Activated B cell treated with CpG ODN at 0.5 μM for 24 hours (primary cell): ENCODE measurements at regions of chr5 and their contacts with region 1.

Region 1: DNA sequence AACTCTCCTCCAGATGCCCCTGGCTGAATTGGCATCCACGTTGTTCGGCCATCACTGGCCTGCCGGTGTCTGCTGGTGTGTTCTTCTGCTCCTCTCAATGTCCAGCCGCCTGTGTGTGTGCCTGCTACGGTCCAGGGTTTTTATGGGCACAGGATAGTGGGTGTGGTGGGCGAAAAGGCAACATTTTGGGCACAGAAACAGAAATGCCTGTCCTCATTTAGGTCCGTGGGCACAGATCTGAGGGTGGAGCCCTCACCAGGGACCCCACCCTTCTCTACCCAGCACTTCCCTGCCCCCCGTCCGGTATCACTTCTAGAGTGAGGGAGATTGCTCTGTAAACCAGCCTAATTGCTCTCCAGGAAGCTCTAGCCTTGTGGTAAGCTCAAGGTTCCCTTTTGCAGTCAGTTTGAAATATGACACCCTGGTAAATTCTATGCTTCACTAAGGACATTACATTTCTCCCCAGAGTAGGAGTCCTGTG is 410.1 kb downstream of the MAT2B start:
- DNase-seq: peak; percentile 50
- ATAC-seq: peak; percentile 59
- H3K4me3 Mint-ChIP-seq: peak overlapping the region; percentile 85
- H3K27ac Mint-ChIP-seq: peak overlapping the region; percentile 99
- H3K4me1 Mint-ChIP-seq: peaks cover 74% of the 10 kb centered on the region
- H3K27me3 Mint-ChIP-seq: no peaks in the 10 kb centered on the region
- CTCF ChIP-seq: no peak

Region 2: DNA sequence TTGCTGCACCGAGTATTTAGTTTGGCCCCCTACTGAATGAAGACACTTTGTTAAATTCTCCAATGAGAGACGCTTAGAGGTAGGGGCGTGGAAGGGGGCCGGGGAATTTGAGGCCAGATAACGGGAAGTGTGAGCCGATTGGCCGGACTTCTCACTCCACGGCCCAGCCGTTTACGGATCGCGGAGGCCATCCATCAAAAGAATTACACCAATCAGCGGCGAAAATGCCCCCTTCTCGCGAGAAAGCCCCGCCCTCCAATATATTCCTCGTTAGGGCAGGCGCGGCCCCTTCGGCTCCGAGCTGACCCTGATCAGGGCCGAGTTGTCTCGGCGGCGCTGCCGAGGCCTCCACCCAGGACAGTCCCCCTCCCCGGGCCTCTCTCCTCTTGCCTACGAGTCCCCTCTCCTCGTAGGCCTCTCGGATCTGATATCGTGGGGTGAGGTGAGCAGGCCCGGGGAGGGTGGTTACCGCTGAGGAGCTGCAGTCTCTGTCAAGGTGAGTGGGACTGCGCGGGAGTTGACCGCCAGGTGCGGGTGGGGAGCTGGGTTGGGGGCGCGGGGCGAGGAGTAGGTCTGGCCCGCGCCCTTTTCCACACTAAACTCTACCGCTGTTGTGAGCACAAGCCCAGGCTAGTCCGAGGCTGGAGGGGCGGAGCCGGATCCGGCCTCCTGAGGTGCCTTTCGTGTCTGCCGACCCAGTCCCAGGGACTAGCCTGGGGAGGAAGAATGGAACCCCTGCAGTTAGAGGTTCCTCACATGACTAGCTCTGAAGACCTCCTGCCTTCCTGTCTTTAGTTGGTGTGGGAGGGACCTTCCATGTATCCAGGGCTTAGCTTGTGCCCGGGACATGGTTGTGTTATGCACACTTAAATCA is 478.0 kb before region 1 on chr5 and contains the start of gene CCNG1:
- CTCF ChIA-PET with region 1: no interaction called
- POLR2A ChIA-PET with region 1: interaction called, 4 read pairs
- intact Hi-C with region 1: loop called (anchors 1 kb)
- DNase-seq: peak; percentile 76
- ATAC-seq: peak; percentile 97
- H3K4me3 Mint-ChIP-seq: peak within 1 kb of the TSS; percentile 89
- H3K27ac Mint-ChIP-seq: peak within 1 kb of the TSS; percentile 89
- H3K4me1 Mint-ChIP-seq: peaks cover 34% of the 10 kb centered on the region
- H3K27me3 Mint-ChIP-seq: no peaks in the 10 kb centered on the region
- CTCF ChIP-seq: no peak
- total RNA-seq, gene CCNG1: 71.2 and 73.0 TPM in 2 replicates

Region 3: DNA sequence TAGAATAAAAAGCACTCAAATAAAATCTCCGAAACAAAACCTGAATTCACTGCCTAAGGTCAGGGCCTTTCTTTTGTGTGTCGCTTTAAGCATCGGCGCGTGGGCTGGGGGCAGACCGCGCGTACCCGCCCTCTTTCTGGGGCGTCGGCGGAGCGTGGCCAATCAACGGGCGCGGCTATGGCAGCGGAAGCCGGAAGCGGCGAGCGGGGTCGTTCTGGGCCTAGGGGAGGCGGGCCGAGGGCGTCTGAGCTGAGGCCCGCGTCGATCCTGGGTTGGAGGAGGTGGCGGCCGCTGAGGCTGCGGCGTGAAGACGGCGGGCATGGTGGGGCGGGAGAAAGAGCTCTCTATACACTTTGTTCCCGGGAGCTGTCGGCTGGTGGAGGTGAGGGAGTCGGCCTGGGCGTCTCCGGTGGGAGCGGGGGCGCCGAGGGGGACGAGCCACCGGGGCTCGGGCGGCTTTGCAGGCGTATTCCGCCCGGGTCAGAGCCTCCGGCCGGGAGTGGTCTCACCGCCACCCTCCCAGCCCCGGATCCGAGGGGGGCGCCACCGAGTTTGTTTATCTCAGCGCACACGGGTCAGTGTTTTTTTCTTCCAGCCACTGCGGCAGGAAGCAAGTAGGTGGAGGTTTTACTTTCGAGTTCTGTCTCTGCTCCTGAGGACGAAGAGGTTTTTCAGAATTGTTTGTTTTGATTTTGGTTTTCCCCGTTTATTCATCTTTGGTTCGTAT is 410.0 kb before region 1 on chr5 and contains the start of gene MAT2B:
- CTCF ChIA-PET with region 1: no interaction called
- POLR2A ChIA-PET with region 1: interaction called, 6 read pairs
- intact Hi-C with region 1: loop called (anchors 1 kb)
- DNase-seq: peak; percentile 92
- ATAC-seq: peak; percentile 90
- H3K4me3 Mint-ChIP-seq: peak within 1 kb of the TSS; percentile 95
- H3K27ac Mint-ChIP-seq: peak within 1 kb of the TSS; percentile 97
- H3K4me1 Mint-ChIP-seq: peaks cover 69% of the 10 kb centered on the region
- H3K27me3 Mint-ChIP-seq: no peaks in the 10 kb centered on the region
- CTCF ChIP-seq: no peak
- total RNA-seq, gene MAT2B: 74.7 and 76.4 TPM in 2 replicates

Region 4: DNA sequence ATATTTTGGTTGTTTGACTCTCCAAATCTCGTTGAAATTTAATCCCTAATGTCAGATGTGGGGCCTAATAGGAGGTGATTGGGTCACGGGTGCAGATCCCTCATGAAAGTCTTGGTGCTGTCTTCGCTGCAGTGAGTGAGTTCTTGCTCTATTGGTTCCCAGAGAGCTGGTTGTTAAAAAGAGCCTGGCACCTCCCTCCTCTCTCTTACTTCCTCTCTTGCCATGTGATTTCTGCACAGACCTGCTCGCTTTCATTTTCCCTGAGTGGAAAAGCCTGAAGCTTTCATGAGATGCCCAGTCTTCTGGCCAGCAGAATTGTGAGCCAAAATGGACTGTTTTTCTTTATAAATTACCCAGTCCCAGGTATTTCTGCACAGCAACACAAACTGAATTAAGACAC is 188.5 kb before region 1 on chr5:
- CTCF ChIA-PET with region 1: interaction called, 3 read pairs
- POLR2A ChIA-PET with region 1: interaction called, 4 read pairs
- intact Hi-C with region 1: loop called (anchors 1 kb)
- DNase-seq: no peak
- ATAC-seq: peak; percentile 96
- H3K4me3 Mint-ChIP-seq: peak overlapping the region; percentile 65
- H3K27ac Mint-ChIP-seq: peak overlapping the region; percentile 72
- H3K4me1 Mint-ChIP-seq: peaks cover 36% of the 10 kb centered on the region
- H3K27me3 Mint-ChIP-seq: no peaks in the 10 kb centered on the region
- CTCF ChIP-seq: no peak

Region 5: GRCh38 chr5:163825661-163826060 is 89.9 kb before region 1 on chr5:
- CTCF ChIA-PET with region 1: no interaction called
- POLR2A ChIA-PET with region 1: no interaction called
- intact Hi-C with region 1: no loop called
- DNase-seq: no peak
- ATAC-seq: no peak
- H3K4me3 Mint-ChIP-seq: no peak overlapping the region
- H3K27ac Mint-ChIP-seq: no peak overlapping the region
- H3K4me1 Mint-ChIP-seq: peaks cover 4% of the 10 kb centered on the region
- H3K27me3 Mint-ChIP-seq: no peaks in the 10 kb centered on the region
- CTCF ChIP-seq: no peak

Region 6: GRCh38 chr5:163944738-163945137 is 29.2 kb after region 1 on chr5:
- CTCF ChIA-PET with region 1: no interaction called
- POLR2A ChIA-PET with region 1: no interaction called
- intact Hi-C with region 1: loop called (anchors 2 kb)
- DNase-seq: no peak
- ATAC-seq: no peak
- H3K4me3 Mint-ChIP-seq: no peak overlapping the region
- H3K27ac Mint-ChIP-seq: no peak overlapping the region
- H3K4me1 Mint-ChIP-seq: peaks cover 26% of the 10 kb centered on the region
- H3K27me3 Mint-ChIP-seq: no peaks in the 10 kb centered on the region
- CTCF ChIP-seq: no peak

Region 7: GRCh38 chr5:163993126-163993525 is 77.6 kb after region 1 on chr5:
- CTCF ChIA-PET with region 1: no interaction called
- POLR2A ChIA-PET with region 1: no interaction called
- intact Hi-C with region 1: no loop called
- DNase-seq: no peak
- ATAC-seq: no peak
- H3K4me3 Mint-ChIP-seq: no peak overlapping the region
- H3K27ac Mint-ChIP-seq: no peak overlapping the region
- H3K4me1 Mint-ChIP-seq: no peaks in the 10 kb centered on the region
- H3K27me3 Mint-ChIP-seq: no peaks in the 10 kb centered on the region
- CTCF ChIP-seq: no peak

Region 8: GRCh38 chr5:164504141-164504772 is 588.7 kb after region 1 on chr5:
- CTCF ChIA-PET with region 1: no interaction called
- POLR2A ChIA-PET with region 1: interaction called, 6 read pairs
- intact Hi-C with region 1: loop called (anchors 2 kb)
- DNase-seq: no peak
- ATAC-seq: peak; percentile 40
- H3K4me3 Mint-ChIP-seq: no peak overlapping the region
- H3K27ac Mint-ChIP-seq: no peak overlapping the region
- H3K4me1 Mint-ChIP-seq: peaks cover 6% of the 10 kb centered on the region
- H3K27me3 Mint-ChIP-seq: peaks cover 3% of the 10 kb centered on the region
- CTCF ChIP-seq: peak; percentile 69